ENCODE measurements at regions of chr3 and their contacts with region 1.

Region 1: GRCh38 chr3:187955076-187955952 is 198.6 kb upstream of the LPP start:
- DNase-seq: no peak
- H3K4me3 Mint-ChIP-seq: no peak overlapping the region
- H3K27ac Mint-ChIP-seq: no peak overlapping the region
- H3K4me1 Mint-ChIP-seq: peaks cover 49% of the 10 kb centered on the region
- H3K27me3 Mint-ChIP-seq: no peaks in the 10 kb centered on the region

Region 2: DNA sequence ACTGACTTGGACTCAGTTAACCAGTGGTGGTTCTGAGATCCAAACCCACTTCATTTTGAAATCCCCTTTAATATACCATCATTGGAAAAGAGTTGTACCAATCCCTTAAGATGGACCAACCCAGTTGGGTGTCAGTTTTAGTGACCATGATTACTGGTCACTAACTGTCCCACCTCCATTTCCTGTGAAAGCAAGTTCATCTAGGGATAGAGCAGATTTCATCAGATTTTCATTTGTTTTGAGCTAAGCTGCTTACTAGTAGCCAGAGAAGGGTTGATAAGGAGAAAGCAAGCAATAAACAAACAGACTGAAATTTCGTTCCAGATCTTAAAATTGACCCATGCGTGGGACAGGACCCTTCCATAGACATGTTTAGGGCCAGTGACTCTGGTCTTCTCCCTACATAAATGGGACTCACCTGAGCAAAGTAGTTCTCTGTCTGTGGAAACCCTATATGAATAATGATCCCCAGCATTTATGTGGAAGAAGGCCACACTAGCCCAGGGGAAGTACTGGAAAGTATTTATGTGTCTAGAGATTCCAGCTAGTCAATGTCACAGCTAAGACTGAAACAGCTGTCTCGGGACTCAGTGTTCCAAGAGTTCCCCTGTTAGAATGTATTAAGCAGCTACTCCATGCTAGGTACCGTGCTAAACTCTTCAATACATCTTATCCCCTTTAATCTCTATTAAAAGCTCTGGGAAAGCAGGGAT is 14.0 kb before region 1 on chr3:
- CTCF ChIA-PET with region 1: interaction called, 17 read pairs
- POLR2A ChIA-PET with region 1: interaction called, 3 read pairs
- DNase-seq: no peak
- H3K4me3 Mint-ChIP-seq: no peak overlapping the region
- H3K27ac Mint-ChIP-seq: no peak overlapping the region
- H3K4me1 Mint-ChIP-seq: peaks cover 6% of the 10 kb centered on the region
- H3K27me3 Mint-ChIP-seq: peaks cover 11% of the 10 kb centered on the region

Region 3: DNA sequence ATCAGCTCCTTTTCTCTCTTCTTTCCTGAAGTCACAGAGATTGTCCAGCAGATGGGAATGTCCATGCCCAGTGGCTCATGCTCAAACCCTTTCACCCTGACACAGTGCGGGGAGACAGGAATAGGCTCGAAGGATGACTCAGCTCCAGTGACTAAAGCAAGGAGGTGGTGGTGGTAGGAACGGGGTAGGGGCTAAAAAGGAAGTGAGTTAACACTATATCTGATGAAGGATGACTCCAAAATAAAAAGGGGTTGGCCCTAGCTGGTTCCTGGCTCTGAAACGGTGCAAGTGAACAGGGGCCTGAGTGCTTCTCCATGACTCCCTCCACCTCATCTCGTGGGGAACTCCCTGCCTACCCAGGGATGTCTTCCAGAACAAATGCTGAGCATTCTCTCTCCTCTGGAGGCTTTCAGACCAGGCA is 31.2 kb after region 1 on chr3:
- CTCF ChIA-PET with region 1: no interaction called
- POLR2A ChIA-PET with region 1: no interaction called
- DNase-seq: peak; percentile 16
- H3K4me3 Mint-ChIP-seq: no peak overlapping the region
- H3K27ac Mint-ChIP-seq: peak overlapping the region; percentile 70
- H3K4me1 Mint-ChIP-seq: peaks cover 46% of the 10 kb centered on the region
- H3K27me3 Mint-ChIP-seq: no peaks in the 10 kb centered on the region